ENCODE measurements at regions of chr12 and their contacts with region 1.

Region 1: GRCh38 chr12:87274594-87275245 is 754.5 kb downstream of the C12orf50 start:
- DNase-seq: no peak
- H3K4me3 ChIP-seq: no peak overlapping the region
- H3K27ac ChIP-seq: no peak overlapping the region
- H3K4me1 ChIP-seq: no peaks in the 10 kb centered on the region
- H3K27me3 ChIP-seq: no peaks in the 10 kb centered on the region
- CTCF ChIP-seq: peak in 4 of 5 experiments; percentile 14 to 31 (median 28)
- EP300 ChIP-seq: no peak
- POLR2A ChIP-seq: no peak

Region 2: DNA sequence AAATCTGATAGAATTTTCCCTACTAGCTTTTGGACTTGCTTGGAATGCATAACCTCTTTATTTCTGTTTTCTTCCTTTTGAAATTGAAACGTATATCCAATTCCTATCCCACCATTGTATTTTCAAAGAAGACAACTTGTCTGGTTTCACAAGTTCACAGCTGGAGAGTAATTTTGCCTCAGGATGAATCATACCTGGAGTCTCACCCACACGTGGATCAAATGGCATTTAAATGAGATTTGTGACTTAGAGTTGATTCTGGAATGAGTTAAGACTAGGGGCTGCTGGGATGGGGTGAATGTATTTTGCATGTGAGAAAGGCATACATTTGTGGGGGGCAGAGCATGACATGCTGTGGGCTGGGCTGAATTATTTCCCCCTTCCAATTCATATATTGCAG is 502.0 kb before region 1 on chr12:
- in situ Hi-C with region 1: no loop called
- intact Hi-C with region 1: no loop called
- DNase-seq: no peak
- H3K4me3 ChIP-seq: no peak overlapping the region
- H3K27ac ChIP-seq: no peak overlapping the region
- H3K4me1 ChIP-seq: no peaks in the 10 kb centered on the region
- H3K27me3 ChIP-seq: no peaks in the 10 kb centered on the region
- CTCF ChIP-seq: no peak
- EP300 ChIP-seq: no peak
- POLR2A ChIP-seq: no peak

Region 3: DNA sequence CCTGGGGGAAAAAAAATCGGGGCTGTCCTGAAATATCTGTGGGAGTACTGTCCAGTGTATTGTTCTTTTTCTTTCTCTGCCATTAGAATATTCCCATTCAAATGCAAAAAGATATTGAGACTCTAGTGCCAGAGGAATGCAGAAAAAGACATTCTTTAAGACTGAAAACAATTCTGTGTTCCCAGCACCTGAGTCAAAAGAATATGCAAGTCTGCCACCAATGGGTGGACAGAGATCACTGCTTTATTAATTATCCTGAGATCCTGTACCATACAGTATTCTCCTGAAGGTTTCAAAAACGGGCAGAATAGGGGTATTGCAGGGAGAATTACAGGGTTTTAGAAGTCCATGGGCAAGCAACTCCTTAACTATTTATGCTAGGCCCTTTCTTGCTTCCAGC is 392.7 kb after region 1 on chr12:
- in situ Hi-C with region 1: loop called in 1 of 4 experiments (anchors 25 kb)
- intact Hi-C with region 1: no loop called
- DNase-seq: no peak
- H3K4me3 ChIP-seq: no peak overlapping the region
- H3K27ac ChIP-seq: no peak overlapping the region
- H3K4me1 ChIP-seq: peaks cover 0 to 3% (median 0%) of the 10 kb centered on the region in 4 donors
- H3K27me3 ChIP-seq: no peaks in the 10 kb centered on the region
- CTCF ChIP-seq: no peak
- EP300 ChIP-seq: no peak
- POLR2A ChIP-seq: no peak

Region 4: GRCh38 chr12:87848248-87848868 is 573.6 kb after region 1 on chr12:
- in situ Hi-C with region 1: loop called in 1 of 4 experiments (anchors 25 kb)
- intact Hi-C with region 1: no loop called
- DNase-seq: no peak
- H3K4me3 ChIP-seq: no peak overlapping the region
- H3K27ac ChIP-seq: no peak overlapping the region
- H3K4me1 ChIP-seq: no peaks in the 10 kb centered on the region
- H3K27me3 ChIP-seq: no peaks in the 10 kb centered on the region
- CTCF ChIP-seq: peak; percentile 55 to 80 (median 75)
- EP300 ChIP-seq: no peak
- POLR2A ChIP-seq: no peak

Measured in transverse colon (tissue), 4 donors.